Activated CD4-positive, alpha-beta T cell treated with anti-CD3 and anti-CD28 coated beads, Interleukin-2, amount 10 ng/mL, durations not matched to agents 24 days and 14 days (primary cell): ENCODE measurements at regions of chr3 and their contacts with region 1.

Region 1: GRCh38 chr3:109023656-109024254 is 70.1 kb upstream of the GUCA1C start:
- DNase-seq: peak; percentile 77
- H3K4me3 Mint-ChIP-seq: no peak overlapping the region
- H3K27ac Mint-ChIP-seq: no peak overlapping the region
- H3K4me1 Mint-ChIP-seq: no peaks in the 10 kb centered on the region
- H3K27me3 Mint-ChIP-seq: peaks cover 14% of the 10 kb centered on the region

Region 2: DNA sequence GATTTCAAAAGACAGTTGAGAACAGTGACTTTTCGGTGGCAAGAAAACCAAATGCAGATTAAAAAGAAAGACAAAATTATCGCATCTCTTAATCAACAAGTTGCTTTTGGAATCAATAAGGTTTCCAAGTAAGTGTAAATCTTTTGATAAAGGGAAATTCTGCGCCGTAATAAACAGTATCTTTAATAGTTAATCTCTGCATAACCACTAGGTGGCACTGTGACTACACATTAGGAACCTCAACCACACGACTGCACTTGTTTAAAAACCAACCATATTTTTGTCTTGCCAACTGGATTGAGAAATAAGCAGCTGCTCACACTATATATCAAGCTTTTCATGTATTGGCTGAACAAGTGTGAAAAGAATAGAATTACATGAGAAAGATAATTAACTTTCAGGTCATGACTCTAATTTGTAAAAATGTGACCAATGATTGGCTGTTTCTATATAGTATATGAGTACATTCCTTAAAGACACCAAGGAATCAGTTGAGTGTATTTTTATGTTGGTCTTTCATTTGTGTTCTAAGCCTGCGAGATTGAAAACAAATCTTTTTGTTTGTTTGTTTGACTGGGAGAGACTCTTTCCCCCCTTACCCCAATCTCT is 361.5 kb before region 1 on chr3:
- intact Hi-C with region 1: loop called (anchors 5 kb)
- DNase-seq: peak; percentile 86
- H3K4me3 Mint-ChIP-seq: no peak overlapping the region
- H3K27ac Mint-ChIP-seq: no peak overlapping the region
- H3K4me1 Mint-ChIP-seq: peaks cover 8% of the 10 kb centered on the region
- H3K27me3 Mint-ChIP-seq: peaks cover 2% of the 10 kb centered on the region

Region 3: DNA sequence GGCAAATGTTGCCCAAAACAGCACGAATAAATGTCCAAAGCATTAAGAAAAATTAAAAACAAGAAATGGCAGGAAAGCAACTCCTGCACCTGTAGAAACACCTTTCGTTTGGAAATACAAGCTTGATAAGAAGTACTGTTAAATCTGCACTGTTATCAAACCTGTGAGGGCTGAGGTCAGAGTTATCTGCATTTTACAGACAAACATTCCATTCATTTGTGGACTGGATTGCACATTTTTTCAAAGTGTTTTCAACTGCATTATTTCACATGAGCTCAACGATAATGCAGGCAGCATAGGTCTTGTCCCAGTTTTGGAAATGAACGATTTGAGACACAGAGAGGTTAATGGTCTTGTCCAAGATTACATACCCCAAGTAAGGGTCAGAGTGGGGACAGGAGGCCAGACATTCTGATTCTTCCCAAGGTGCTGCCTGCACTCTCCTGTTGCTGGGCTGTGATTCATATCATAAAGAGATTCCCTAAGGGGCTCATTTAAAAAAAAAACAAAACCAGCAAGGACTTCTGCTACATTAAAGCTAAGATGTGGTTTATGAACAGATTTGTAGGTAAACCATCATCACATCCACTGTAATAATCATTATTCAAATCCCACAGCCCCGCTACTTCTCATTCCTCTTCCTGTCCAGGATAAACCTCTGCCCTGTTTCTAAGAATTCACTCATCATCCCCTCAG is 83.0 kb before region 1 on chr3:
- intact Hi-C with region 1: no loop called
- DNase-seq: no peak
- H3K4me3 Mint-ChIP-seq: no peak overlapping the region
- H3K27ac Mint-ChIP-seq: no peak overlapping the region
- H3K4me1 Mint-ChIP-seq: no peaks in the 10 kb centered on the region
- H3K27me3 Mint-ChIP-seq: peaks cover 9% of the 10 kb centered on the region